ENCODE measurements at regions of chr2 and their contacts with region 1.

Region 1: DNA sequence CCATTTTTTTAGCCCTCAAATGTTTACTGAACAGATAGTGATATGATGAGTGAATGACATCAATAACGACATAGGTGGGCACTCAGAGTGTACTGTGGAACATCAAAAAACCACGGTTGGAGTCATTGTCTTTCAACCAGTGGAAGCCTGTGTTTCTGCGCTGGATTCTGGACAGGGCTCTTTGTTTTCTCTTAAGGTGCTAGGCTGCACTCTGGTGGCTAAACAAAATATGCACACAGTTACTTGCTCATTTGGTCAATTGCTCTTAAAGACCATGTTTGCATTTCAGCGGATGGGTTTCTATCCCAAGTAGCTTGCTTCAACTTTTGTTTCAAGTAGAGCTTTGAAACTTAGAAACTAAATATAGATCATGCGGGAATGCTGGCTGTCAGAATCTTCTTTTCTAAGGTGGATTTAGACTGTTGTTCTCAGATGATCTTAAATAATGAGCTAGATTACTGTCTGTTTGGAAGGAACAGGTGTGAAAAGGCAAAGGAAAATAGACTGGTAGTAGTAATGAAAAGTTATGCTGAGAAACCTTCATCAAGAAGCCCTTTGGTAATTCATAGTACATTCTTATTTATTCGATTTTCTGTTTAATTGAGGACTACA is 48.5 kb upstream of the LYPD6B start:
- DNase-seq: peak; percentile 80
- H3K4me3 ChIP-seq: no peak overlapping the region
- H3K27ac ChIP-seq: no peak overlapping the region
- H3K4me1 ChIP-seq: no peaks in the 10 kb centered on the region
- H3K27me3 ChIP-seq: no peaks in the 10 kb centered on the region
- CTCF ChIP-seq: peak; percentile 73

Region 2: GRCh38 chr2:147937744-147938349 is 1052.1 kb before region 1 on chr2:
- CTCF ChIA-PET with region 1: no interaction called
- POLR2A ChIA-PET with region 1: no interaction called
- intact Hi-C with region 1: loop called (anchors 5 kb)
- DNase-seq: peak; percentile 52
- H3K4me3 ChIP-seq: no peak overlapping the region
- H3K27ac ChIP-seq: no peak overlapping the region
- H3K4me1 ChIP-seq: no peaks in the 10 kb centered on the region
- H3K27me3 ChIP-seq: no peaks in the 10 kb centered on the region
- CTCF ChIP-seq: peak; percentile 88

Region 3: GRCh38 chr2:147989809-147990403 is 1000.1 kb before region 1 on chr2:
- CTCF ChIA-PET with region 1: no interaction called
- POLR2A ChIA-PET with region 1: no interaction called
- intact Hi-C with region 1: loop called (anchors 5 kb)
- DNase-seq: peak; percentile 63
- H3K4me3 ChIP-seq: no peak overlapping the region
- H3K27ac ChIP-seq: no peak overlapping the region
- H3K4me1 ChIP-seq: no peaks in the 10 kb centered on the region
- H3K27me3 ChIP-seq: no peaks in the 10 kb centered on the region
- CTCF ChIP-seq: peak; percentile 80

Region 4: GRCh38 chr2:148519013-148519412 is 471.0 kb before region 1 on chr2:
- CTCF ChIA-PET with region 1: no interaction called
- POLR2A ChIA-PET with region 1: no interaction called
- intact Hi-C with region 1: loop called (anchors 10 kb)
- DNase-seq: no peak
- H3K4me3 ChIP-seq: no peak overlapping the region
- H3K27ac ChIP-seq: no peak overlapping the region
- H3K4me1 ChIP-seq: no peaks in the 10 kb centered on the region
- H3K27me3 ChIP-seq: no peaks in the 10 kb centered on the region
- CTCF ChIP-seq: no peak

Region 5: GRCh38 chr2:148565272-148565894 is 424.6 kb before region 1 on chr2:
- CTCF ChIA-PET with region 1: no interaction called
- POLR2A ChIA-PET with region 1: no interaction called
- intact Hi-C with region 1: loop called (anchors 5 kb)
- DNase-seq: peak; percentile 45
- H3K4me3 ChIP-seq: no peak overlapping the region
- H3K27ac ChIP-seq: no peak overlapping the region
- H3K4me1 ChIP-seq: no peaks in the 10 kb centered on the region
- H3K27me3 ChIP-seq: no peaks in the 10 kb centered on the region
- CTCF ChIP-seq: peak; percentile 44; the same call in 1 of the 2 replicates

Region 6: DNA sequence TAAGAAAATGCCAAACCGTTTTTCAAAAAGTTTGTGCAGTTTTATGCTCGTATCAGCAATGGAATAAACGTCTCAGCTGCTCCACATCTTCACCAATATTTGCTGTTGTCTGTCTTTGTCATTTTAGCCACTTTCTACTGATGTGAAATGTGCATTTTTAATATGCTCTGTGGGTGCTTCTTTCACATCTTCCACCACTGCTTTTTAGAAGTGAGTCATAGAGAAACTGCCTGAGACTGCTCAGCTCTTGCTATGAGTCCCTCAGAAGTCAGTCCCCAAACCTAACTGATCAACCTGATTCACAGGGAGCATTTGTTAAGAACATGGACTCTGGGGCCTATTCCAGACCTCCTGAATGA is 386.4 kb before region 1 on chr2:
- CTCF ChIA-PET with region 1: no interaction called
- POLR2A ChIA-PET with region 1: no interaction called
- intact Hi-C with region 1: no loop called
- DNase-seq: no peak
- H3K4me3 ChIP-seq: no peak overlapping the region
- H3K27ac ChIP-seq: no peak overlapping the region
- H3K4me1 ChIP-seq: no peaks in the 10 kb centered on the region
- H3K27me3 ChIP-seq: no peaks in the 10 kb centered on the region
- CTCF ChIP-seq: no peak

Region 7: DNA sequence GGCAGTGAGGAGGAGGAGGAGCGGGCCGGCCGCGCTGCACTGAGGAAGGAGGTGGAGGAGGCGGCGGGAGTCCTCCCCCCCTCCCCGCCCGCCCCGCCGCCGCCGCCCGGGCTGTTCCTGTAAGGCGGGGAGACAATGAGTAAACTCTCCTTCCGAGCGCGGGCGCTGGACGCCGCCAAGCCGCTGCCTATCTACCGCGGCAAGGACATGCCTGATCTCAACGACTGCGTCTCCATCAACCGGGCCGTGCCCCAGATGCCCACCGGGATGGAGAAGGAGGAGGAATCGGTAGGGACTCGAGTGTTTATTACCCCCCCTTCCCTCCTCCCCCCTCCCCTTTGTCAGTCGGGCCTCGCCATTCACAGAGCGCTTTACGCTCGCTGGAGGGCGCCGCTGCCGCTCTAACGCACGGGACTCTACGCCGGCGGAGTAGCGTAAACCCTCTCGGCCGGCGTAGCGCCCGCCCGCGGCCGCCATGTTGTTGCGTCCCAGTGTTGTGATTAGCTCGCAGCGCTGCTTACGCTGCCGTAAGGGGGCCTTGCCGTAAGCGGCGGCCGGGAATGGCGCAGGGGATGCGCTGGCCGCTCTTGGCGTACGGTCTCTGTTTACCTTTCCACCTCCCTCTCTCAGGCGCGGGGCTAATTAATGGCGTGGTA is 345.0 kb before region 1 on chr2:
- CTCF ChIA-PET with region 1: no interaction called
- POLR2A ChIA-PET with region 1: no interaction called
- intact Hi-C with region 1: loop called (anchors 2 kb)
- DNase-seq: peak; percentile 96
- H3K4me3 ChIP-seq: peak overlapping the region; percentile 80
- H3K27ac ChIP-seq: peak overlapping the region; percentile 91
- H3K4me1 ChIP-seq: peaks cover 5% of the 10 kb centered on the region
- H3K27me3 ChIP-seq: no peaks in the 10 kb centered on the region
- CTCF ChIP-seq: peak; percentile 31; the same call in 1 of the 2 replicates

Region 8: GRCh38 chr2:148926291-148926961 is 63.6 kb before region 1 on chr2:
- CTCF ChIA-PET with region 1: no interaction called
- POLR2A ChIA-PET with region 1: no interaction called
- intact Hi-C with region 1: loop called (anchors 5 kb)
- DNase-seq: peak; percentile 61
- H3K4me3 ChIP-seq: no peak overlapping the region
- H3K27ac ChIP-seq: no peak overlapping the region
- H3K4me1 ChIP-seq: peaks cover 11% of the 10 kb centered on the region
- H3K27me3 ChIP-seq: no peaks in the 10 kb centered on the region
- CTCF ChIP-seq: peak; percentile 83

Measured in A673 (cell line).